Left ventricle myocardium inferior (tissue), 1 donor: ENCODE measurements at regions of chr18 and their contacts with region 1.

Region 1: GRCh38 chr18:5884375-5884774 is 10.9 kb downstream of the TMEM200C start:
- DNase-seq: no peak
- H3K4me3 ChIP-seq: no peak overlapping the region
- H3K27ac ChIP-seq: no peak overlapping the region
- H3K4me1 ChIP-seq: no peaks in the 10 kb centered on the region
- H3K27me3 ChIP-seq: peaks cover 63% of the 10 kb centered on the region
- CTCF ChIP-seq: no peak

Region 2: GRCh38 chr18:6120820-6121279 is 236.5 kb after region 1 on chr18:
- intact Hi-C with region 1: no loop called
- DNase-seq: no peak
- H3K4me3 ChIP-seq: no peak overlapping the region
- H3K27ac ChIP-seq: peak overlapping the region; percentile 74
- H3K4me1 ChIP-seq: peaks cover 23% of the 10 kb centered on the region
- H3K27me3 ChIP-seq: no peaks in the 10 kb centered on the region
- CTCF ChIP-seq: no peak

Region 3: DNA sequence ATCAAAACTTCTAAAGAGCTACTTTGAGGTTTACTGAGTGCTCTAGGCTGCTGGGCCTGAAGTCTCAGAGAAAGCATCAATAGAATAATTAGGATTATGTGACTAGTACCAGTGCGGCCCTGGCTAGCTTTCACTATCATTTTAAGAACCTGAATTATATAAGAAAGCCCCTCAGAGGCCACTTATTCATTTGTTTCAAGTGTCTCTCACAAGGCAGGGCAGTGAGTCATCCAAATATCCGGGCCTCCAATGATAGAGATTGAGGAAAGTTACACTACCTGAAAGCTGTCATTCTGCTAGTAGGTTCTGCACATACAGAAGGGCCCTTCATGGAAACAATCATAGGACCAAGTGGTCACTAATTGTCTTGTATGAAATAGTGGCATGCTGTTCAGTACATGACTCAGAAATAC is 337.2 kb after region 1 on chr18:
- intact Hi-C with region 1: loop called (anchors 10 kb)
- DNase-seq: no peak
- H3K4me3 ChIP-seq: no peak overlapping the region
- H3K27ac ChIP-seq: no peak overlapping the region
- H3K4me1 ChIP-seq: no peaks in the 10 kb centered on the region
- H3K27me3 ChIP-seq: no peaks in the 10 kb centered on the region
- CTCF ChIP-seq: no peak

Region 4: DNA sequence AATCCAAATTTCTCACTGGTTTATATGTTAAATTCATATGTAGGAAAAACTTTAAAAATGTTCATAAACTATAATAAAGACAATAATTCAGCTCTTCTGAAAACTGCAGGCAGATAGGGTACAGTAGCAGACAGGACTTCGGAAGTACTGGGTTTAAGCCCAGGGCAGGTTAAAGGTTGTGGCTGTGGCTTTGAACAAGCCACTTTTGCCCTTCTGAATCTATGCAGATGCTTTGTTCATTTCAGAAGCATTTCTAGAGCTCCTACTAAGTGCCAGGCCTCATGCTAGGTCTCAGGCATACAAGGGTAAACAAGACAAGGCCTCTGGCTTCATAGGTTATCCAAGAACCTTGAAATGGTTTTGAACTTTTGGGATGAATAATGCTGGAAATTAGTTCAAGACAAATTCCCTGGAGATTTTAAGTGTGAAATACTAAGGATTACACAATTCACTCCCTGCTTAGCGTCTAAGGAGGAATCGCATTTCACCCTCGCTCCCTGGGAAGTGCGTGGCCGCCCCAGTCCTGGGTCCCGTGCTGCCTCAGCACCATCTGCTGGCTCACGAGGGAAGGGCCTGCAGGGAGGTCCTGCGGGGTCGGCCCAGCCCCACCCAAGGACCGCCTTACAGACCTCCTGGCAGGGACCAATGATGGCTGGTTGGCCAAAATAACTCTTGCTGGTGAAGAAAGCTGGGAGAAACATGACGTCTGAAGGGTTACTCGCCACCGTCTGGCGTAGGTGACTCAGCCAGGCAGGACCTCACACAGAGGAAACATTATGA is 598.0 kb after region 1 on chr18:
- intact Hi-C with region 1: loop called (anchors 10 kb)
- DNase-seq: peak; percentile 65
- H3K4me3 ChIP-seq: no peak overlapping the region
- H3K27ac ChIP-seq: no peak overlapping the region
- H3K4me1 ChIP-seq: peaks cover 10% of the 10 kb centered on the region
- H3K27me3 ChIP-seq: peaks cover 19% of the 10 kb centered on the region
- CTCF ChIP-seq: peak; percentile 89

Region 5: DNA sequence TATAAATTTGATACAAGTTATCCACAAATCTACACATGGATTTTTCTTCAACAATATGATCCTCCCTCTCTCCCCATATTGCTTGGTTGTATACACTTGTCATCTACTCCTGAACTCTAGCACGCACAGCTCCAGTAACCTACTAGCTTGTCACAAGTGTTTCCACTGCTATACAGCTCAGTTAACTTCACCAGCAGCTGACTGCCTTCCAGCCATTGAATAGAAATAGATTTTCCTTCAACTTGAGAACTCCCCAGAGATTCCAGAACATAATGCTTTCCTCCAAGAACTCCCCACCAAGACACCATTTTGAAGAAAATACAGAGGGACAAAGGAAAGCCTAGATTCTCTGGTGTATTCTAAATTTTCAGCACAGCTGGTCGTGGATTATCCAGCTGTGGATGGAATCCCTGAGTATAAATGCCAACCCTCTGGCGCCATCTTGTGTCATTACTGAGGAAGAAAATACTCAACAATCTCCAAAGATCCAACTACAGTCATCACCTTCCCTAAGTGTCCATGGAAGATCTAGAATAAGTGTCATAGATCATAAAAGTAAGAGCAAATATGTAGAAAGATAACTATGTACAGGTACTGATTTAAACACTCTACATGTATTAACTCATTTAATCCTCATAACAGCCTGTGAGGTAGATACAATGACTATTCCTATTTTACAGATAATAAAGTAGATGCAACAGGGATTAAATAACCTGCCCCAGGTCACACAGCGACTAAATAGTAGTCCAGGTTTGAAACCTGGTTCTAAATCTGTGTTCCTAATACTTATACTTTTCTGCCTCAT is 1001.8 kb after region 1 on chr18:
- intact Hi-C with region 1: loop called (anchors 10 kb)
- DNase-seq: no peak
- H3K4me3 ChIP-seq: no peak overlapping the region
- H3K27ac ChIP-seq: no peak overlapping the region
- H3K4me1 ChIP-seq: no peaks in the 10 kb centered on the region
- H3K27me3 ChIP-seq: no peaks in the 10 kb centered on the region
- CTCF ChIP-seq: peak; percentile 79